Endothelial cell of umbilical vein (primary cell): ENCODE measurements at regions of chr21 and their contacts with region 1.

Region 1: GRCh38 chr21:41283211-41283818 is 33.3 kb upstream of the FAM3B start:
- DNase-seq: peak; percentile 70
- H3K4me3 ChIP-seq: no peak overlapping the region
- H3K27ac ChIP-seq: no peak overlapping the region
- H3K4me1 ChIP-seq: no peaks in the 10 kb centered on the region
- H3K27me3 ChIP-seq: peaks cover 2 to 8% of the 10 kb centered on the region in 2 experiments
- CTCF ChIP-seq: peak; percentile 63 to 65
- POLR2A ChIP-seq: no peak

Region 2: GRCh38 chr21:41054018-41054578 is 229.2 kb before region 1 on chr21:
- CTCF ChIA-PET with region 1: no interaction called
- POLR2A ChIA-PET with region 1: no interaction called
- dilution Hi-C with region 1: no loop called
- intact Hi-C with region 1: no loop called
- DNase-seq: no peak
- H3K4me3 ChIP-seq: no peak overlapping the region
- H3K27ac ChIP-seq: no peak overlapping the region
- H3K4me1 ChIP-seq: no peaks in the 10 kb centered on the region
- H3K27me3 ChIP-seq: no peaks in the 10 kb centered on the region
- CTCF ChIP-seq: no peak
- POLR2A ChIP-seq: no peak

Region 3: DNA sequence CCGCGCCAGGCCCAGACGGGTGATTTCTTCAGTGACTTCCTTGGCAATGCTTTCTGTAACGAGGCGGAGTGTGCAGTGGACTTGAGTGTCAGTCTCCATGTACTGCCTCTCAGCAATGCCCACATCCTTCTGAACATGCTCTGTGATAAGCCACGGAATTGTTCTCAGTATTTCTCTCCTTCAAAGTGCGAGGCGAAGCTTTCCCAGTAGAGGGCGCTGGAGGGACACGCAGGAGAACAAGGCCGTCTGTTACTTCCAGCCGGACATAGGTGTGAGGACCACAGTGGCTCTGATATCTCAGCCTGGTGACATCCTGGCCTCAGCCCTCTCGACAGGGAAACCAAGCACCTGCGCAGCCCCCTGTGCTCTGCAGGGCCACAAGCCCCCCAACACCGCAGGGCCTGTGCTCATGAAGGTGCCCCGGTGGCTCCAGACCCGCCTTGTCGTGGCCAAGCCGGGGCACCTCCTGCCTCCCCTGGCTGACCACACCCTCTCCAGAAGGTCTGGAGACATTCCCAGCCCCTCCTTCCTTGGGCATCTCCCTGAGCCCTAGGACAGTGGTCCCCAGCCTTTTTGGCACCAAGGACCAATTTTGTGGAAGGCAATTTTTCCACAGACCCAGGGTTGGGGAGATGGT is 161.4 kb before region 1 on chr21:
- CTCF ChIA-PET with region 1: interaction called, 25 read pairs
- POLR2A ChIA-PET with region 1: no interaction called
- dilution Hi-C with region 1: no loop called
- intact Hi-C with region 1: loop called (anchors 5 kb)
- DNase-seq: peak; percentile 79
- H3K4me3 ChIP-seq: no peak overlapping the region
- H3K27ac ChIP-seq: no peak overlapping the region
- H3K4me1 ChIP-seq: no peaks in the 10 kb centered on the region
- H3K27me3 ChIP-seq: no peaks in the 10 kb centered on the region
- CTCF ChIP-seq: peak; percentile 85 to 90
- POLR2A ChIP-seq: no peak

Region 4: GRCh38 chr21:41294539-41295231 is 11.4 kb after region 1 on chr21:
- CTCF ChIA-PET with region 1: interaction called, 12 read pairs
- POLR2A ChIA-PET with region 1: no interaction called
- dilution Hi-C with region 1: no loop called
- intact Hi-C with region 1: no loop called
- DNase-seq: no peak
- H3K4me3 ChIP-seq: no peak overlapping the region
- H3K27ac ChIP-seq: no peak overlapping the region
- H3K4me1 ChIP-seq: no peaks in the 10 kb centered on the region
- H3K27me3 ChIP-seq: no peaks in the 10 kb centered on the region
- CTCF ChIP-seq: no peak
- POLR2A ChIP-seq: no peak

Region 5: DNA sequence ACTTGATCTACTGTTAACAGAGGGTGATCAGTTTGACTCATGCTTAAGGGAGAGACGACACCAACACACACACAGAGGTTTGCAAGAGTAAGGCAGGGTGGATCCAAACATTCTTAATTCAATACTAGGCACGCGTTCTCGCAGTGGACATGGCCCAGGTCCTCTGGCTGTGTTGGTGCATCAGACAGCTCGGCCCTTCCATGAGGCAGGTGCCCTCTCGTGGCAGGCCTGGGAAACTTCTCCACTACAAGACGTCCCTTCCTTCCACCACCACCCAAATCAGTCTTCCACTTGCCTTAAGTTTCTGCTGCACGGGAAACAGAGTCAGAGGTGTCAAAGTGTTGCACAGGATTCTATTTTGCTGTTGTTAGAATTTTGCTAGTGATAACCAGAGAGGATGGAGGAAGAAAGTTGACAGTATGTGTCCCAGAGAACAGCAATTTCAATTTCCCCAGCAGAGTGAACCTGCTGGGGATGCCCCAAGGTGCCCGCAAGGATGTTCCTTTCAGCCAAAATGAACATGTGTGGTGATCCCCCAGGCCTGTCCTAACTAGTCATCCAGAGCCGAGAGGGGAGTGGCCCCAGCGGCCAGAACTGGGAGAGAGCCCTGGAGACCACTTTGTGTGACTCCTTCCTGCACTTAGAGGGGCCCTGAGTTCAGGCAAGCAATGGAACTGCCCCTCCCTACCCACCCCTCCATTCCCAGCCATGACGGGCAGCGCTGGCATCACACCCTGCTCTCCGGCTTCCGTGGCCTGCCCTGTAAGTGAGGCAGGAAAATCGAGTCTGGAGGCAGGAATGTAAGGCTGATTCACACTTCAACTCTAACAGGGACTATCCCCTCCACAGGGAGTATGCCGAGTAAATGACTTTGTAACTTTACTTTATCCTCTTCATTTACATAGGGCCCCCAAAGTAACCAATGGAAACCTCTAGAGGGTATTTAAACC is 177.5 kb after region 1 on chr21:
- CTCF ChIA-PET with region 1: interaction called, 220 read pairs
- POLR2A ChIA-PET with region 1: no interaction called
- dilution Hi-C with region 1: no loop called
- intact Hi-C with region 1: loop called (anchors 1 kb)
- DNase-seq: peak; percentile 56
- H3K4me3 ChIP-seq: no peak overlapping the region
- H3K27ac ChIP-seq: no peak overlapping the region
- H3K4me1 ChIP-seq: no peaks in the 10 kb centered on the region
- H3K27me3 ChIP-seq: no peaks in the 10 kb centered on the region
- CTCF ChIP-seq: peak; percentile 65 to 85
- POLR2A ChIP-seq: no peak

Region 6: DNA sequence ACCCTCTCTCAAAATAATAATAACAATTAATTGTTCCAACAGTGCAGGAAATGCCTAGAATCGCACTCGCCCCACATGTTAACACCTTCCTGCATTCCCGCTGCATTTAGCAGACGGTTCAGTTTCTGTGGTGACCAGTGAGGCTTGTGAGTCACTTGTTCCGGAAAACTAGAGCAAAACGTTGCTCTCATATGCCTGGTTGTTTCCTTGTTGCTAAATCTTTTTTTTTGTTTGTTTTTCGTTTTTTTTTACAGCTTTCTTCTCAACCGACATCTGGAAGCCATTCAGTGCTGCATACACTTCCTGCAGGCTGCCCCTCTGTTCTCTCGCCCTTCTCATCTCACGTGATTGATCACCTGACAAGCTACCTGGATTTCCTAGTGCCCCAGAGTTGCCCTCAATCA is 281.6 kb after region 1 on chr21:
- CTCF ChIA-PET with region 1: no interaction called
- POLR2A ChIA-PET with region 1: no interaction called
- dilution Hi-C with region 1: no loop called
- intact Hi-C with region 1: no loop called
- DNase-seq: peak; percentile 4
- H3K4me3 ChIP-seq: no peak overlapping the region
- H3K27ac ChIP-seq: no peak overlapping the region
- H3K4me1 ChIP-seq: no peaks in the 10 kb centered on the region
- H3K27me3 ChIP-seq: peaks cover 0 to 2% of the 10 kb centered on the region in 2 experiments
- CTCF ChIP-seq: no peak
- POLR2A ChIP-seq: no peak

Region 7: DNA sequence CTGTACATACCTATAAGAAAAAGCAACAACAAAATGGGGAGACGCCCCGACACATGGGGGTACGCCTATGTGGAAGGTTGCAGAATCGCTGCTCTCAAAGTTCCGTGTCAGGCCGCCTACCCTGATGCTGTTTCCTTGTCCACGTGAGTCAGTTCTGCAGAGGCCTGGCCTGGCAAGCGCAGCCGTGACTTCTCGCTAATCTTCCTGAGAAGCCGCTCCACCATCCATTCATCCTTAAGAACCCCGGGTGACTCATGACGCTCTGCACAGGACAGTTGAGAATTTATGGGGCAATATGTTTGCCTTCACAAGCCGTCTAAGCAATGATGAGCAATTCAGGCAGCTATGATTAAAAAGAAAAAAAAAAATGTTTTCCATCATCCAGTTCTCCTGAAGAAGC is 346.9 kb after region 1 on chr21:
- CTCF ChIA-PET with region 1: no interaction called
- POLR2A ChIA-PET with region 1: no interaction called
- dilution Hi-C with region 1: no loop called
- intact Hi-C with region 1: no loop called
- DNase-seq: no peak
- H3K4me3 ChIP-seq: no peak overlapping the region
- H3K27ac ChIP-seq: no peak overlapping the region
- H3K4me1 ChIP-seq: no peaks in the 10 kb centered on the region
- H3K27me3 ChIP-seq: no peaks in the 10 kb centered on the region
- CTCF ChIP-seq: no peak
- POLR2A ChIP-seq: no peak

Region 8: GRCh38 chr21:41663801-41664788 is 380.8 kb after region 1 on chr21:
- CTCF ChIA-PET with region 1: no interaction called
- POLR2A ChIA-PET with region 1: no interaction called
- dilution Hi-C with region 1: no loop called
- intact Hi-C with region 1: no loop called
- DNase-seq: peak; percentile 6
- H3K4me3 ChIP-seq: no peak overlapping the region
- H3K27ac ChIP-seq: no peak overlapping the region
- H3K4me1 ChIP-seq: no peaks in the 10 kb centered on the region
- H3K27me3 ChIP-seq: peaks cover 0 to 2% of the 10 kb centered on the region in 2 experiments
- CTCF ChIP-seq: no peak
- POLR2A ChIP-seq: no peak

Region 9: DNA sequence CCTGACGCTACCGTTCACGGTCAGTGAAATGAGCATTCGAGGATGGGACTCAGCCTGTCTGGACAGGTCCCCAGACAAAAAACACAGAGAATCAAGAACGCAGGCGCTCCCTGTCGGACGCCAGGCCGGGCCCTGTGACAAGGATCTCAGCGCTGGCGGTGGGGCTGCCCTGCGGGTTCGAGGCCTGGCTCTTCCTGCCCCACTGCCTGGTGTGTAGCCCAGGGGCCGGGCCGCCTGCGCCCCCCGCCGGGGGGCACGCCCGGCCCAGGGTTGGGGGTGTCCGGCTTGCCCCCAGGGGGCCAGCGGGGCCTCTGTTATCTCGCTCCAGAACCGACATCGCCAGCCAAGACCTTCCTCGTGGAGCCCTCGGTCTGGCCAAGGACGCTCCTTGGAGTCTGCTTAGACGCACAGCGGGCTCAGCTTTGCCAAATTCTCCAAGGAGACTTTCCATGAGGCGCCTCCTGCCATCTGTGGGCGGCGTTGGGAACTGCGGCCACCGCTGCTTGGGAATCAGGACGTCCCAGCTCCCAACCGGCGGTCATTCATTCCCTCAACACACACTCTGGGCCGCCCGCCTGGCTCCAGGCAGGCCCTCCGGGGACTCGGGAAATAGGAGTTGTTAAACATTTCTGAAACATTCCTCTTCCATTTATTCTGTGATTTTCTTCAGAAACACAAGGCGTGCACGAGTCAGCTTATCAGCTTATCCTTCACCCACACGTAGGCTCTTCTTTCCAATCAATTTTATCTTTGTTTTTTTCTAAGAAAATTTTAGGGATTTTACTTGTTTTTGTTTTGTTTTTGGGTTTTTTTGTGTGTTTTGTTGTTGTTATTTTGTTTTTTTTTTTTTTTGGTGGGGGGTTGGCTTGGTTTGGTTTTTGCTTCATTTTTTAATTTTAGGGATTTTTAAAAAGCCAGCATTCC is 494.9 kb after region 1 on chr21:
- CTCF ChIA-PET with region 1: interaction called, 92 read pairs
- POLR2A ChIA-PET with region 1: no interaction called
- dilution Hi-C with region 1: no loop called
- intact Hi-C with region 1: loop called (anchors 1 kb)
- DNase-seq: peak; percentile 58
- H3K4me3 ChIP-seq: no peak overlapping the region
- H3K27ac ChIP-seq: no peak overlapping the region
- H3K4me1 ChIP-seq: no peaks in the 10 kb centered on the region
- H3K27me3 ChIP-seq: peaks cover 23 to 51% of the 10 kb centered on the region in 2 experiments
- CTCF ChIP-seq: peak; percentile 77 to 95
- POLR2A ChIP-seq: no peak

Region 10: DNA sequence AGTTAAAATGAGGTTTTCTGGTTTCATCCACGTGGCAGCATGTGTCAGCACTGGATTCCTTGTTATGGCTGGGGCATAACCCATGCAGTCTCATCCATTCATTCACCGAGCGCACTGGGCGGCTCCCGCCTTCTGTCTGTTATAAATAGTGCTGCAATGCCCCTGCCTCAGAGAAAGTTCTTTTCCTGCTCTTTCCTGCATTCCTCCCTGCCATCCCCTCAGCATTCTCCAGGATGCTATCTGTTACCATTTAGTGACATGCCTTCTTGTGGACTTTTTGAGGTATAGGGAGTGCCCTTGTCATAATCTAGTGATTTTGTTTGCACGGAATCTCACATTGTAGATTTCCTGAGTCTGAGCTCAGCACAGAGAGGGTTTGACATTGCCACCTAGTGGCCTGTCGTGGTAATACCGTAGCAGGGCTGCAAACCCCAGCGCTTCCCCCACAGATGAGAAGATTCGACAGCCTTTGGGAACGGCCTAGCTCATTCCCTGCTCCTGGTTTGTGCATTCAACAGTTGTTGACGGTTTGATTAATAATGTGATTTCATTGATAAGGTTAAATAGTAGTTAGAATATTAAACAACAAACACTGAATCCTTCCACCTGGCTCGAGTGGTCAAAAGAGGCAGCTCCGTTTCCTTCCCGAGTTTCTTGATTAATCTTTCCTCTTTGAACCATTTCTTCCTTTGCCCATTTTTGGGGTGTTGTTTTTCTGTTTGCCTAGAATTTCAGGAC is 834.1 kb after region 1 on chr21:
- CTCF ChIA-PET with region 1: interaction called, 23 read pairs
- POLR2A ChIA-PET with region 1: no interaction called
- dilution Hi-C with region 1: no loop called
- intact Hi-C with region 1: loop called (anchors 5 kb)
- DNase-seq: peak; percentile 78
- H3K4me3 ChIP-seq: peak overlapping the region in 1 of 3 experiments; percentile 51
- H3K27ac ChIP-seq: no peak overlapping the region
- H3K4me1 ChIP-seq: peaks cover 4% of the 10 kb centered on the region
- H3K27me3 ChIP-seq: peaks cover 26 to 33% of the 10 kb centered on the region in 2 experiments
- CTCF ChIP-seq: peak; percentile 87 to 91
- POLR2A ChIP-seq: no peak